ENCODE measurements at regions of chr15 and their contacts with region 1.

Region 1: DNA sequence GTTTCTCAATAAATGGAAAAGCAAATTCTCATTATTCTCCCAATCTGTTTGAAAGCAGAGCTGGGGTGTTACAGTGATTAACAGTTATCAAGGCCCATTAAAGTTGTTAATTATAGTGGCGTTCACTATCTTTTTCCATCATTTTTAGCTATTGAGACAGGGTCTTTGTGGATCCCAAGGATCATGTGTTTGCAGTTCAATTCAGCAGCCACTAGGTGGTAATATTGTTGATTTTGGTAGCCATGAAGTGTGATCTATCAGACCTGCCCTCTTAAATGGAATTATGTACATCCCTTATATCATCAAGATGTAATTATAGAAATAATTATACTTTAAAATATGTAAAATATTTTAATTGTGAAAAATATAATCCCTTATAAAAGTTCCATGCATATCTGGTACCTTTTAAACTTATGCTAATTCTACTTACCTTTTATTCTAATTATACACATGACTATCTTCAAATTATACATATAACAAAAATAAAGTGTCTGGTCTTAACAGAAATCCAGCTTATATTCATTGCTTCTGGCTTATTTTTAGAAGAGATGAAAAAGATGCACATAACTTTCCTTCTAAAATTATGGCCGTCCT is 126.4 kb downstream of the GREM1 start:
- DNase-seq: no peak
- ATAC-seq: peak; percentile 32; the same call in 1 of the 2 replicates
- H3K4me3 Mint-ChIP-seq: no peak overlapping the region
- H3K27ac Mint-ChIP-seq: no peak overlapping the region
- H3K4me1 Mint-ChIP-seq: peaks cover 8% of the 10 kb centered on the region
- H3K27me3 Mint-ChIP-seq: no peaks in the 10 kb centered on the region
- CTCF ChIP-seq: peak; percentile 46

Region 2: GRCh38 chr15:32834156-32834555 is 10.1 kb before region 1 on chr15:
- CTCF ChIA-PET with region 1: interaction called, 29 read pairs
- POLR2A ChIA-PET with region 1: no interaction called
- DNase-seq: no peak
- ATAC-seq: no peak
- H3K4me3 Mint-ChIP-seq: no peak overlapping the region
- H3K27ac Mint-ChIP-seq: no peak overlapping the region
- H3K4me1 Mint-ChIP-seq: peaks cover 7% of the 10 kb centered on the region; the same call in 1 of the 2 replicates
- H3K27me3 Mint-ChIP-seq: no peaks in the 10 kb centered on the region
- CTCF ChIP-seq: no peak

Region 3: DNA sequence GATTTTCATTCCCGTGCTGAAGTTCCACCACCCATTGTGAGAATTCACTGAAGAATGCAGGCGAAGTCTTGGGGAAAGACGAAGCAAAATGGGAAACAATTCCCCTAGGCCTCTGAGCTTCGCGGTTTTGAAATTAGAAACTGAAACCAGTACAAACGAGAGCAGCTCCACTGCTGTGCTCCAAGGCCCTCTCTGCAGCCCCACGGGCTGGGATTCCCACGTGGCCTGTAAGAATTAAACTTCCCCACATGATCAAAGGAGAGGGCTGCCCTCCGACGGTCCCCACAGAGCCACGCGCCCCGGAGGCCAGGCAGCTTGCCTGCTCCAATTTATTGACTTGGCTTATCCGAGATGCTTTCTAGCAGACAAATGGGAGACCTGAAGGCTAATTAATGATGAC is 17.5 kb after region 1 on chr15:
- CTCF ChIA-PET with region 1: interaction called, 20 read pairs
- POLR2A ChIA-PET with region 1: no interaction called
- DNase-seq: peak; percentile 26
- ATAC-seq: peak; percentile 79
- H3K4me3 Mint-ChIP-seq: no peak overlapping the region
- H3K27ac Mint-ChIP-seq: peak overlapping the region; percentile 83; the same call in 1 of the 2 replicates
- H3K4me1 Mint-ChIP-seq: peaks cover 14% of the 10 kb centered on the region
- H3K27me3 Mint-ChIP-seq: no peaks in the 10 kb centered on the region
- CTCF ChIP-seq: no peak

Region 4: DNA sequence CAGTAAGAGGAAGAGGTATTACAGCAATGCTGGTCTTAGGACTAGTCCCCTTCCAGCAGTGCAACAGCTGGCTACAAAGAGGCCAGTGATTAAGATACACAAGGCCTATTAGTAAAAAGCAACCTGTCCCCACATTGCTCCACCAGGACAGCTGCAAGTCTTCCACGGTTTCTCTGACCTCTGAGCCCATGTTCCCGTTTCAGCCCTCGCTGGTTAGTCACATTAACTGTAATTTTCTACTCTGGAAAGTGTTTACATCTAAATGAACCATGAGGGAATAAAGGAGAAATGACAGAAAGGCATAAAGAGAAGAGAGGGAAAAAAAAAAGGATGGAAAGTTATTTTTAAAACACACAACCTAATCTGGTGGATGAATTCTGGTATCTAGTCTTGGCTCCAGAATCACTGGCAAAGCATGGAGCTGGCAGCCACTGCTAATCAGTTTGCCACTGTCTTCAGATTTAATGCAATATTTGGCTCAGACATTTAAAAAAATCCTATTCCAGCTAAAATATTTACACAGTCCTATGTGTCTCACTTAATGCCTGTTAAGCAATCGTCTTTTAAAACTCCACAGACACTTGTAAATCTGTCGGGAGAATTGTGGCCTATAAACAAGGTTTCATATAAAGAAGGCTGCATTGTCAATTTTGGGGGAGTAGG is 28.5 kb after region 1 on chr15:
- CTCF ChIA-PET with region 1: no interaction called
- POLR2A ChIA-PET with region 1: no interaction called
- DNase-seq: no peak
- ATAC-seq: no peak
- H3K4me3 Mint-ChIP-seq: no peak overlapping the region
- H3K27ac Mint-ChIP-seq: no peak overlapping the region
- H3K4me1 Mint-ChIP-seq: no peaks in the 10 kb centered on the region
- H3K27me3 Mint-ChIP-seq: no peaks in the 10 kb centered on the region
- CTCF ChIP-seq: no peak

Region 5: DNA sequence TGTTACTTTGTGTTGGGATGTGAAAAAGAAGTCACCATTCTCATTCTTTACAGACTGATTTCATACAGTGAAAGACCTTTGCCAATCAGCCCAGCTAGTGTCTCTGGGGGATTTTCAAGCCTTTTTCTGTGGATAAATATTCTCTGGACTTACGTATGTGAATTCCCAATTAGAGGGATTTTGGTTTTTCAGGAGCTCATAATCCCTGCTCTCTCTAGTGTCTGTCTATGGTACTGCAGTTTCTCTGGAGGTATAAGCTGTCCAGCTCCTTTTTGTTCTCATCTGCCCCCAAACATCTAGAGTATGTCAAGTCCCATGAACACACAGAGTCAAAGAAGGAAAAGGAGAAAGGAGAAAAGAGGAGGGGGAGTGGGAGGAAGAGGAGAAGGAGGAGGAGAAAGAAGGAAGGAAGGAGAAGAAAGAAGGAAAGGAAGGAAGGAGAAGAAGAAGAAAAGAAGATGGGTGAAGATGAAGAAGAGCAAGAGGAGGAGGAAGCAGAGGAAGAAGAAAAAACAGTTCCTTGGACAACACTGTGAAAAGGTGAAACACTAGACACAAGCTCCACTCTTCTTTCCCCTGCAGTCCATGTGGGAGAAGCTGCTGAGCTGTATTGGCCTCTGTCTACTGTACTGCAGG is 92.2 kb after region 1 on chr15:
- CTCF ChIA-PET with region 1: interaction called, 30 read pairs
- POLR2A ChIA-PET with region 1: no interaction called
- DNase-seq: no peak
- ATAC-seq: peak; percentile 69
- H3K4me3 Mint-ChIP-seq: no peak overlapping the region
- H3K27ac Mint-ChIP-seq: no peak overlapping the region
- H3K4me1 Mint-ChIP-seq: no peaks in the 10 kb centered on the region
- H3K27me3 Mint-ChIP-seq: no peaks in the 10 kb centered on the region; the same call in 1 of the 2 replicates
- CTCF ChIP-seq: no peak; the same call in 1 of the 2 replicates

Region 6: DNA sequence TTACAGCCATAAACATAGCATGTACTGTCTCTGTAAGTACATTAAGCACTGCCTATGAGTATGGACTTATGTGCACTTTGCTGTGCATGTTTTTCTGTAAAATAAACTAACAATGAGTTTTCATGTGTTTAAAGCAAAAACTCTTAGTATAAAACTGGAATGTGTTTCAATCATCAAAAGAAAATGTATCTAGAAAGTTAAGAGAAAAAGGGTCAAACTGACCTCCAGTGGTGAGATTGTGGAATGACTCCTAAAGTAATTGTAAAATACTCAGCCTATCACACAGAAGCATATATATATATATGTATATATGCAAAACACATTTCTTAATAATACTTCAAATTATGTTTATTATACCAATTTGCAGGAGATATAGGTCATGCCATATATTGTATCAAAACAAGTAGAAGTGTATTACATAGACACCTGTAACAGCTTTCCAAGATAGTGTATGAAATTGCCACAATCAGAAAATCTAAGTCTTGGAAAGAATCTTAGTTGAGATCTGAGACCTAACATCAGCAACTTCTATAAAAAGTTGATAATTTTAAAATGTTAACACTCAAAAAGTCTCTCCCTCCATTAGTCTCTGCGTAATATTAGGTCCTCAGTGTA is 150.7 kb after region 1 on chr15:
- CTCF ChIA-PET with region 1: interaction called, 29 read pairs
- POLR2A ChIA-PET with region 1: no interaction called
- DNase-seq: no peak
- ATAC-seq: no peak
- H3K4me3 Mint-ChIP-seq: no peak overlapping the region
- H3K27ac Mint-ChIP-seq: no peak overlapping the region
- H3K4me1 Mint-ChIP-seq: peaks cover 9% of the 10 kb centered on the region
- H3K27me3 Mint-ChIP-seq: no peaks in the 10 kb centered on the region
- CTCF ChIP-seq: peak; percentile 51; the same call in 1 of the 2 replicates

Region 7: GRCh38 chr15:33125894-33126537 is 281.8 kb after region 1 on chr15:
- CTCF ChIA-PET with region 1: no interaction called
- POLR2A ChIA-PET with region 1: no interaction called
- DNase-seq: no peak
- ATAC-seq: peak; percentile 47
- H3K4me3 Mint-ChIP-seq: no peak overlapping the region
- H3K27ac Mint-ChIP-seq: 0 out of 2 replicates have a peak overlapping the region, but pooled peaks have one; percentile 5
- H3K4me1 Mint-ChIP-seq: peaks cover 18% of the 10 kb centered on the region
- H3K27me3 Mint-ChIP-seq: peaks cover 3% of the 10 kb centered on the region; the same call in 1 of the 2 replicates
- CTCF ChIP-seq: no peak